ENCODE measurements at regions of chr2 and their contacts with region 1.

Region 1: DNA sequence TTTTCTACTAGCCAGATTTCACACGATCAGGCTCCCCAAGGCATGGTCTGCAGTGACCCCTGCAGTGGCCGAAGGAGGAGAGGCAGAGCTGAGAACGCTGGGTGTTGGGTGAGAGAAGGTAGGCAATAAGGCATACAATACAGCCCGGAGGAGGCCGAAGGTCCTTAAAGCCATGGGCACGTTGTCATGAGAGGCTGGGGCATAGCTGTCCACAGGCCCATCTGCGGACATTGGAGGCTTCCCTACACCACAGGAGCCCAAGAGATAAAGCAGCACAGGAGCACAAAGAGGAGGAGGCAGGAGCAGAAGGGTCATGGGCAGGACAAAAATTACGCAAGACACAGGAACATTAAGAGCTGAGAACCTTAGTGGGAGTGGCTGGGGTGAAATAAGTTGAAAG is 16.7 kb upstream of the BZW1 start:
- DNase-seq: peak; percentile 77
- H3K4me3 Mint-ChIP-seq: no peak overlapping the region
- H3K27ac Mint-ChIP-seq: no peak overlapping the region
- H3K4me1 Mint-ChIP-seq: peaks cover 22% of the 10 kb centered on the region
- H3K27me3 Mint-ChIP-seq: no peaks in the 10 kb centered on the region
- CTCF ChIP-seq: no peak

Region 2: DNA sequence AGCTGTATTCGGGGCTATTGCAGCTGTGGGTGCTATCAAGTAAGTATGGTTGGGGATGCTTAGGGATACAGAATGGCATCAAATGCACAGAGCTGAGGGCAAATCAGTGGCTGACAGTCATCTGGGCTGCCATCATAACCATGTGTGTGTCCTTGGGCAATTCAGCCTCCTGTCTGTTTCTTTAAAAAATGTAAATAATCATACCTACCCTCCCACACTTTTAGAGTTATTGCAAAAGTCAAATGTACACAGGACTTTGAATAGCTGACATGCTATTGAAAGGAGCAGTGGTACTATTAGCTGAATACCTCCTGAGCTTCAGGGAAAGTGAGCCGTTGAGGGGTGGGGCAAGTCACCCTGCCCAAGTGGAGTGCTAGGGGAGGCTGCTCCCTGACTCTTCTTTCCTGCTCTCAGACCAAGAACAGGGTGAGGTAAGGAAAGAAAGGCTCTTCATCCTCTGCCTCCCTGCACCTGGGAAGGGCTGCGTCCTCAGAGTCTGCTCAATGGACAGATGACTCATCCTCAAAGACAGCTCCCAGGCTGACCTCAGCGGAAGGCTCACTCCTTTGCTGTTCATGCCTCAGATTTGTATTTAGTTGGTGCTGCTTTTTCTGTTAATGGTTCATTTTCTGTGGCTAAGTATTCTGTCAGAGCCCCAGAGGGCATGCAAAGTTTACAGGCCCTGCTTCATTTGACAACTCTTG is 38.3 kb before region 1 on chr2:
- CTCF ChIA-PET with region 1: no interaction called
- POLR2A ChIA-PET with region 1: interaction called, 12 read pairs
- intact Hi-C with region 1: no loop called
- DNase-seq: peak; percentile 89
- H3K4me3 Mint-ChIP-seq: no peak overlapping the region
- H3K27ac Mint-ChIP-seq: peak overlapping the region; percentile 74
- H3K4me1 Mint-ChIP-seq: peaks cover 25% of the 10 kb centered on the region
- H3K27me3 Mint-ChIP-seq: no peaks in the 10 kb centered on the region
- CTCF ChIP-seq: no peak

Region 3: GRCh38 chr2:200993097-200993496 is 198.1 kb after region 1 on chr2:
- CTCF ChIA-PET with region 1: no interaction called
- POLR2A ChIA-PET with region 1: no interaction called
- intact Hi-C with region 1: no loop called
- DNase-seq: no peak
- H3K4me3 Mint-ChIP-seq: no peak overlapping the region
- H3K27ac Mint-ChIP-seq: no peak overlapping the region
- H3K4me1 Mint-ChIP-seq: no peaks in the 10 kb centered on the region
- H3K27me3 Mint-ChIP-seq: no peaks in the 10 kb centered on the region
- CTCF ChIP-seq: no peak